Calu3 (cell line): ENCODE measurements at regions of chr17 and their contacts with region 1.

Region 1: GRCh38 chr17:1573916-1574696 is 11.5 kb upstream of the PITPNA start:
- DNase-seq: peak; percentile 89
- H3K4me3 Mint-ChIP-seq: no peak overlapping the region
- H3K27ac Mint-ChIP-seq: no peak overlapping the region
- H3K4me1 Mint-ChIP-seq: no peaks in the 10 kb centered on the region
- H3K27me3 Mint-ChIP-seq: no peaks in the 10 kb centered on the region
- CTCF ChIP-seq: peak; percentile 83

Region 2: GRCh38 chr17:1455797-1456599 is 118.1 kb before region 1 on chr17 and contains the start of gene CRK:
- CTCF ChIA-PET with region 1: no interaction called
- intact Hi-C with region 1: no loop called
- DNase-seq: peak; percentile 97
- H3K4me3 Mint-ChIP-seq: peak within 1 kb of the TSS; percentile 78
- H3K27ac Mint-ChIP-seq: peak within 1 kb of the TSS; percentile 64
- H3K4me1 Mint-ChIP-seq: peaks cover 8% of the 10 kb centered on the region
- H3K27me3 Mint-ChIP-seq: no peaks in the 10 kb centered on the region
- CTCF ChIP-seq: no peak
- total RNA-seq, gene CRK: 38.9 and 40.0 TPM in 2 replicates

Region 3: DNA sequence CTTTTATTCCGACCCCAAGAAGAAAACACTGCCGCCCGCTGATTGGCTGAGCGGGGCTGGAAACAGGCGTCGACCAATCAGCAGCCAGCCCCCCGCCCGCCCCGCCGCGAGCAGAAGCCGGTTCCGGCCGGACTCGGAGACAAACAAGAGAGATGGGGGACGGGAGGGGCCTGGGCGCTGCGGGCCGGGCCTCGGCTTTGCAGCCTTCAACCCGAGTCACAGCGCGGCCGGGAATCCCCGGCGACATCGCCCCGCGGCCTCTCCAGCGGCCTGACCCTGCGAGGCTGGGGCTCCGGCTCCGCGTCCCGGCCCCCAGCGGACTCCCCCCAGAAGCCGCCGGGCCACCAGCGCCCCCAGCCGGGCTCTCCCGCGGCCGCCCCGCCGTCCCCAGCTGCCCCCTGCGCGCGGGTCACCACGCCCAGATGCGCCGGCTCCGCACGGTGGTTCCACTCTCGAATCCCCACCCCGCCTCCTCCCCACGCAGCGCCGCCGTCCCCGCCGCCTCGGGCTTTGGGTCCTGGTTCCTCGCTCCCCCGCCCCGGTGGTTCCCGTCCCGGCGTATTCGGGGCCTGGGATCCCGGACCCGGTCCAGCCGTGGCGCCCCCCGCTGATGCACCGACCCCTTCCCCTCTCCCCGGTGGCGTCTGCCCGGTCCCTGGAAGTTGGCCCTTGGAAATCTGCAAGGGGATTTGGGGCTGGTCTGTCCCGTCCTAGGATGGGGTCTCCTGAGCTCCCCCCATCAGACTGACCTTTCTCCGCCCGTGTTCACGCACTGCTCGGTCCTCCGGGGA is 54.9 kb after region 1 on chr17:
- CTCF ChIA-PET with region 1: interaction called, 54 read pairs
- intact Hi-C with region 1: loop called (anchors 1 kb)
- DNase-seq: peak; percentile 81
- H3K4me3 Mint-ChIP-seq: peak overlapping the region; percentile 85
- H3K27ac Mint-ChIP-seq: peak overlapping the region; percentile 85
- H3K4me1 Mint-ChIP-seq: no peaks in the 10 kb centered on the region
- H3K27me3 Mint-ChIP-seq: peaks cover 41% of the 10 kb centered on the region
- CTCF ChIP-seq: no peak

Region 4: DNA sequence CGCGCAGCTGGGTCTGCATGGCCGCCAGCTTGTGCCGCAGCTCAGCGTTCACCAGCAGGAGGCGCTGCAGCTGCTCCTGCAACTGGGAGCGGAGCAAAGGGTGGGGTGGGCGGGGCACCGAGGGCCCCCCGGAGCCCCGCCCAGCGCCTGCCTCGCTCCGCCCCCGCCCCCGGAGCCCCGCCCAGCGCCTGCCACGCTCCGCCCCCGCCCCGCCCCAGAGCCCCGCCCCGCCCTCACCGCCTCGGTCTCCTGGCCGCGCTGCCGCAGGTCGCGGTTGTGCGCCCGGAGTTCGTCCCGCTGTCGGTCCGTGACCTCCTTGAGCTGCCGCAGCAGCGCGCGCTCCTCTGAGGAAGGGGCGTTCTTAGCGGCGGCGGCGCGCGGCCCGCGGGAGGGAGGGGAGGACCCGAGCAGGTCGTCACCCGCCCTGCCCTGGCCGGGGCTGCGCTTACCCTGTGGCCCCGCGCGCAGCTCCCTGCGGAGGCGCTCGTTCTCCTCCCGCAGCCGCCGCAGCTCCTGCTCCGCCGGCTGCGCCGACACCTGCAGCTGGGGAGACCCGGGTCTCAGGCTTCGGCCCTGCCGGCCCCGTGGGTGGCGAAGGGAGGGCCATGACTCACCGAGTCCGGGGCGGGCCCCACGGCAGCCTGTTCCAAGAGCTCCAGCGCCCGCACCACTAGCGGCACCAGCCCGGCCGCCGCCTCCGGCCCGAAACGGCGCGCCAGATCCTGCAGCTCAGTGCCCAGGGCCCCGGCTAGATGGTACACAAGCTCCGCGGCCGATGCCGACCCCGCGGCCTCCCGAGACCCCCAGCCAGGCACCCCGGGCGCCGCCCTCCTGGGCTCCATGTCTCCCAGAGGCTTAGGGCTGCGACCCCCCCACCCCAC is 75.1 kb after region 1 on chr17:
- CTCF ChIA-PET with region 1: interaction called, 22 read pairs
- intact Hi-C with region 1: no loop called
- DNase-seq: peak; percentile 88
- H3K4me3 Mint-ChIP-seq: peak overlapping the region; percentile 57
- H3K27ac Mint-ChIP-seq: no peak overlapping the region
- H3K4me1 Mint-ChIP-seq: no peaks in the 10 kb centered on the region
- H3K27me3 Mint-ChIP-seq: no peaks in the 10 kb centered on the region
- CTCF ChIP-seq: no peak

Region 5: DNA sequence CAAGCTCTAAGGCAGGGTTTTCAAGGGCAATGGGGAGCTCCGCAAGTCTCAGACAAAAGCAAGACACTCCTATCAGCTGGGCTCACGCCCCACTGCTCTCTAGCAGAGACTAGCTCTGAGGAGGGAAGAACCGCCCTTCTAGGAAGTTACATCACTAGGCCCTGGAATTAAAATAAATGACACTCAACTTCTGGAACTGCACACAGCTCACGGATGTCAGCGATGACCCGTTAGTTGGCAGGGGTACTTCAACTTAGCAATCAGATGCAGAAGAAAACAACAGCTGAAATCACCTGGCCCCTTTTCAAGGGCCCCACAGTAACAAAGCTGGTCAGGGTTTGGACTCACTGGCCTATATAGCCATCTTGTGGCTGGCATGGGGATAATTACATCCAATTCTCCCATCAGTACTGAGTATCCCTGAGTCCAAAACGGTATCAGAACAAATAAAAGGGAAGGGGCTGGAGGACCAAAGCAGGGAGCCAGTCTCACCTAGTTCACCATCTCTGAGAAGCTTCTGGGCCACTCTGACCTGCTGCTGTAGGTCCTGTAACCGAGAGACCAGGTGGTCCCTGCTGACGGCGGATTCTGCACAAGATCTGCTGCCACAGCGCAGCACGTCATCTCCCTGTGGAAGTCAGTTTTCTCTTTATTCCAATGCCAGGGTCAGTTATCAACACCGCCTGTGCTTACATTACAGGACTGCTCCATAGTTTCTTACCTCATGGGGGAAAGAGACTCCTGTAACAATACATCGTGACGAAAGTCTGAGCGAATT is 209.9 kb after region 1 on chr17:
- CTCF ChIA-PET with region 1: no interaction called
- intact Hi-C with region 1: no loop called
- DNase-seq: no peak
- H3K4me3 Mint-ChIP-seq: no peak overlapping the region
- H3K27ac Mint-ChIP-seq: no peak overlapping the region
- H3K4me1 Mint-ChIP-seq: peaks cover 8% of the 10 kb centered on the region
- H3K27me3 Mint-ChIP-seq: no peaks in the 10 kb centered on the region
- CTCF ChIP-seq: no peak